Activated T-helper 1 cell treated with anti-CD3 and anti-CD28 coated beads, Interleukin-12 subunit alpha, Interleukin-12 subunit beta, Interleukin-2, Interleukin-4 antibody, amounts not matched to agents 30 ng/mL and 10 ng/mL and 1 ng/mL, durations not matched to agents 14 hours and 24 hours and 36 hours (primary cell): ENCODE measurements at regions of chr15 and their contacts with region 1.

Region 1: DNA sequence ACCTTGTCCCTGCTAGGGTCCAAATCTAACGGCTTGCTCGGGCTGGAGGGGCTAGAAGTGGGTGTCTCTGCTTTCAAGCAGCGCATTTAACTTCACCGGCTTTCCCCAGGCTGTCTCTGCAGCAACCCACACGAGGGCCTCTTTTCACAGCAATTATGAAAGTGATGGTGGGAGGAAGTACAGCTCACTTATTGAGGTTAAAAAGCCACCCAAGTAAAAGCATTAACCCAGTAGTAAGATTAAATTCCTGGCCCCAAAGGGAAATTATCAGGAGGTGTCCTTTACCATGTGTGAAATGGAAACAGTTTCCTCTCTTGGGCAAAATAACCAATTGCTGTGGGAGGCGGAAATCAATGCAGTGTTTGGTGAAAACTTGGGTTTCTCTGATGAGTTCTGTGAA is 41.1 kb downstream of the NGRN start:
- DNase-seq: peak; percentile 30
- H3K4me3 Mint-ChIP-seq: peak overlapping the region; percentile 63
- H3K27ac Mint-ChIP-seq: peak overlapping the region; percentile 80
- H3K4me1 Mint-ChIP-seq: peaks cover 44% of the 10 kb centered on the region
- H3K27me3 Mint-ChIP-seq: peaks cover 2% of the 10 kb centered on the region

Region 2: DNA sequence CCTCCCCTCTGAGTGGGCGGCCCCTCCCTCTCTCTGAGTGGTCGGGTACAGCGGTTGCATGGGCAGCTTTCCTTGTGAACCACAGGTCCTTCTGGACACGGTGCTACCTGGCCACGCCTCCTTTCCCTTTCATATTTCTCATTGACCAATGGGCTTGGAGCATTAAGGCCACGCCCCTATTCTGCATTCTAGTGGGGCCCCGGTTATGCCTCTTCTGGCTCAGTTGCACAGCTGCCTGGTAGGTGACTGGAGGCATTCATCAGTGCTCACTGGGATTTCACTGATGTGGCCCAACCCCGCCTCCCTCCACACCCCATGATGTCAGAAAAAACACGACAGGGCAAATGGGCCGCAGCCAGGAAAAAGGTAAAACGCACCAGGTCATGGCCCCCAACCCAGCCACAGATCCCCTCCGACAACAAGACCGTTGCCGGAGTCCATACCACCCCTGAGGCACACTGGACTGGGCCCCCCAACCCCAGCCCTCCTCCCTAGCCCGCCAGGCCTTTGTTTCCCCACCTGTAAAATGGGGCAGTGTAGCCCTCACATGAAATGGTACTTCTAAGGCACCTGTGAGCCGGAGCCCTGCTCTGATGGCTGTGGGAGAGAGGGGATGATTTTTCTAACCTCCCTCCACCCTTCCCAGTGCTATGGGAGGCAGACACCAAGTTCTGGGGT is 14.7 kb before region 1 on chr15:
- intact Hi-C with region 1: loop called (anchors 1 kb)
- DNase-seq: no peak
- H3K4me3 Mint-ChIP-seq: no peak overlapping the region
- H3K27ac Mint-ChIP-seq: no peak overlapping the region
- H3K4me1 Mint-ChIP-seq: peaks cover 6% of the 10 kb centered on the region
- H3K27me3 Mint-ChIP-seq: peaks cover 19% of the 10 kb centered on the region